ENCODE measurements at regions of chr3 and their contacts with region 1.

Region 1: GRCh38 chr3:18809640-18810305 is 338.5 kb upstream of the KCNH8 start:
- DNase-seq: no peak

Region 2: DNA sequence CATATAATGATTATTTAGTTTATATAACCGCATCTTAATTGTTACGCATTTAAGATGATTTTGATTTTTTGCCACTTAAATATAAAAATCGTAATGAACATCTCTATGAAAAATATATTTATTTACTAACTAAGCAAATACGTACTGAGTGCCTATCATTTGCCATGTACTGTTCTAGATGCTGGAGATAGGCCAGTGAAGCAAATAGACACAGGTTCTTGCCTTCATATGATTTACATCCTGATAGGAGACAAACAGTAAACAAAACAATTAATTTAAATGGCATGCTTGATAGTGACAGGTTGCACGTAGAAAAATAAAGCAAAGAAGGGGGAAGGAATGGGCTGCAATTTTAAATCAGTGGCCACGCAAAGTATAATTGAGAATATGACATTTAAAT is 555.7 kb after region 1 on chr3:
- intact Hi-C with region 1: no loop called
- DNase-seq: no peak

Region 3: GRCh38 chr3:19757773-19758172 is 948.0 kb after region 1 on chr3:
- intact Hi-C with region 1: loop called in 1 of 2 experiments (anchors 5 kb)
- DNase-seq: no peak

Measured in posterior vena cava (tissue), 2 donors.